GM12878 (cell line): ENCODE measurements at regions of chr18 and their contacts with region 1.

Region 1: GRCh38 chr18:76982841-76983587 is 149.6 kb downstream of the MBP start:
- DNase-seq: peak; percentile 48
- ATAC-seq: peak; percentile 83
- H3K4me3 ChIP-seq: no peak overlapping the region
- H3K27ac ChIP-seq: no peak overlapping the region
- H3K4me1 ChIP-seq: peaks cover 21% of the 10 kb centered on the region
- H3K27me3 ChIP-seq: no peaks in the 10 kb centered on the region
- CTCF ChIP-seq: peak; percentile 91 to 93 (median 92)
- EP300 ChIP-seq: no peak
- POLR2A ChIP-seq: no peak
- RAD21 ChIP-seq: peak; percentile 83

Region 2: DNA sequence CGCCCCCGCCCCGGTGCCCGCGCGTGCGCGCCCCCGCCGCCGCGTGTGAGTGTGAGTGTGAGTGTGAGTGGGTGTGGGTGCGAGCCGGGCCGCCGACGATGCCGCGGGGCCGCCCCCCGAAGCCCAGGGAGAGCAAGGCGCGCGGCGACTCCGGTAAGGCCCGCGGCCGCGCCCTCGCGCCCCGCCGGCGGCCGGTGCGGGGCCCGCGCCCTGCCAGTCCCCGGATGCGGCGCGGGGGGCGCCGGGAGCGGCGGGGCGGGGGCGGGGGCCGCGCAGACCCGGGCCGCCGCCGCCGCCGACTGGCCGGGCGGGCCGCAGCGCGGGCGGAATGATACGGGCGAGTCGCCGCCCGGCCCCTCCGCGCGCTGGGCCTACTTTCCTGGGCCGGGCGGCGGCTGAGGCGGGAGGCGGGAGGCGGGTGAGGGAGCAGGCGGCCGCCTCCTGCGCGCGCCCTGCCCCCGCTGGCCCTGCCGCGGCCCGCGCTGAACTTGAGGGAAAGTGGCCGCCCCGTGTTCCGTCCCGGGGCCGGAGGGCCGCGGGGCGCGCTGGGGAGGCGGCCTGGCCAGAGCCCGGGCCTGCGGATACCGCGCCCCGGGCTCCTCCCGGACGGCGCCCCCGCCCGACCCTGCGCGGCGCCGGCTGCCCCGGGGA is 160.4 kb before region 1 on chr18 and contains the start of gene ZNF236:
- CTCF ChIA-PET with region 1: interaction called, 5 read pairs
- POLR2A ChIA-PET with region 1: no interaction called
- RAD21 ChIA-PET with region 1: interaction called, 4 read pairs
- SMC1A ChIA-PET with region 1: interaction called, 12 read pairs
- in situ Hi-C with region 1: no loop called
- intact Hi-C with region 1: no loop called
- DNase-seq: no peak
- ATAC-seq: peak; percentile 47
- H3K4me3 ChIP-seq: peak within 1 kb of the TSS; percentile 100
- H3K27ac ChIP-seq: peak within 1 kb of the TSS; percentile 95
- H3K4me1 ChIP-seq: peaks cover 16% of the 10 kb centered on the region
- H3K27me3 ChIP-seq: no peaks in the 10 kb centered on the region
- CTCF ChIP-seq: no peak
- EP300 ChIP-seq: no peak
- POLR2A ChIP-seq: peak; percentile 76
- RAD21 ChIP-seq: no peak
- polyA plus RNA-seq, gene ZNF236: 1.0 to 1.3 TPM

Region 3: DNA sequence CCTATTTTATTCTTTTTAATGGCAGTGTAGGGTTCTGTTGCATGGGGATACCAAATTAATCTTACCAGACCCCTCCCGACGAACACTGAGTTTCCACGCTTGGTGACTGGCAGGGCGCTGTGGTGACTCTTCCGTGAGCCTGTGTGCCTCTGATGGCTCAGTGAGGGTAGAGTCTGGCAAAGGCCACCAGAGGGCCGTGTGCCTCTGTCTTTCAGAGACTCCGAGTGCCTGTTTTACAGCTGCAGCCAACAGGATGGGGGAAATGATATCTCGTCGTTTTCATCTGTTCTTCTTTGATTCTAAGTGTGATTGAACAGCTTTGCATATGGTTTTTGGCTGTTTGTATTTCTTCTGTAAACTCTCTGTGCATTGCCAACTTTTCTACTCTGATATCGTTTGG is 60.9 kb before region 1 on chr18:
- CTCF ChIA-PET with region 1: interaction called, 236 read pairs
- POLR2A ChIA-PET with region 1: interaction called, 8 read pairs
- RAD21 ChIA-PET with region 1: interaction called, 69 read pairs
- SMC1A ChIA-PET with region 1: interaction called, 97 read pairs
- in situ Hi-C with region 1: loop called (anchors 5 kb)
- intact Hi-C with region 1: loop called (anchors 1 kb)
- DNase-seq: peak; percentile 26
- ATAC-seq: peak; percentile 100
- H3K4me3 ChIP-seq: no peak overlapping the region
- H3K27ac ChIP-seq: no peak overlapping the region
- H3K4me1 ChIP-seq: no peaks in the 10 kb centered on the region
- H3K27me3 ChIP-seq: no peaks in the 10 kb centered on the region
- CTCF ChIP-seq: peak; percentile 81 to 83 (median 81)
- EP300 ChIP-seq: peak in 1 of 2 experiments; percentile 12; a peak in 1 of 4 replicates
- POLR2A ChIP-seq: no peak
- RAD21 ChIP-seq: peak; percentile 92

Region 4: DNA sequence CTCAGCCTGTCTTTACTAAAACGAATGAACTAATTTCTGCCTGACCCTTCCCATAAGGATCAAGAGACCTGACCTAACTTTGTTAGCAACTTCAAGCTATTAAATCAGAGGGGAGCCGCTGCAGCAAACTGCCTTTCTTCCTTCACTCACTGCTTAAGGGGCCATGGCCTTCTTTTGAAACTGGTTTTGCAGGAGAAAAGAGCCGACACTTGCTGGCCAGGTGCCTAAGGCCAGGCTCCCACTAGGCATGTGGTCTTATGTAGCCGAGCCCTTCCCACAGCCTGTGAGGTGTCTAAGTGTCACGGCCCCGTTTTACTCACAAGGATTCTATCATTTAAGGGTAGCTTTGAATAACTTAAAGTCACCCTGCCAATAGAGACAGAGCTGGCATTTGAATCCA is 29.9 kb before region 1 on chr18:
- CTCF ChIA-PET with region 1: interaction called, 208 read pairs
- POLR2A ChIA-PET with region 1: no interaction called
- RAD21 ChIA-PET with region 1: interaction called, 7 read pairs
- SMC1A ChIA-PET with region 1: interaction called, 140 read pairs
- in situ Hi-C with region 1: no loop called
- intact Hi-C with region 1: no loop called
- DNase-seq: no peak
- ATAC-seq: no peak
- H3K4me3 ChIP-seq: no peak overlapping the region
- H3K27ac ChIP-seq: no peak overlapping the region
- H3K4me1 ChIP-seq: no peaks in the 10 kb centered on the region
- H3K27me3 ChIP-seq: no peaks in the 10 kb centered on the region
- CTCF ChIP-seq: no peak
- EP300 ChIP-seq: no peak
- POLR2A ChIP-seq: no peak
- RAD21 ChIP-seq: no peak

Region 5: GRCh38 chr18:76970770-76971559 is 12.0 kb before region 1 on chr18:
- CTCF ChIA-PET with region 1: interaction called, 208 read pairs
- POLR2A ChIA-PET with region 1: no interaction called
- RAD21 ChIA-PET with region 1: interaction called, 70 read pairs
- SMC1A ChIA-PET with region 1: interaction called, 140 read pairs
- in situ Hi-C with region 1: no loop called
- intact Hi-C with region 1: no loop called
- DNase-seq: no peak
- ATAC-seq: no peak
- H3K4me3 ChIP-seq: no peak overlapping the region
- H3K27ac ChIP-seq: no peak overlapping the region
- H3K4me1 ChIP-seq: peaks cover 4% of the 10 kb centered on the region; the same call in 1 of the 2 replicates
- H3K27me3 ChIP-seq: no peaks in the 10 kb centered on the region
- CTCF ChIP-seq: no peak
- EP300 ChIP-seq: no peak
- POLR2A ChIP-seq: no peak
- RAD21 ChIP-seq: no peak

Region 6: DNA sequence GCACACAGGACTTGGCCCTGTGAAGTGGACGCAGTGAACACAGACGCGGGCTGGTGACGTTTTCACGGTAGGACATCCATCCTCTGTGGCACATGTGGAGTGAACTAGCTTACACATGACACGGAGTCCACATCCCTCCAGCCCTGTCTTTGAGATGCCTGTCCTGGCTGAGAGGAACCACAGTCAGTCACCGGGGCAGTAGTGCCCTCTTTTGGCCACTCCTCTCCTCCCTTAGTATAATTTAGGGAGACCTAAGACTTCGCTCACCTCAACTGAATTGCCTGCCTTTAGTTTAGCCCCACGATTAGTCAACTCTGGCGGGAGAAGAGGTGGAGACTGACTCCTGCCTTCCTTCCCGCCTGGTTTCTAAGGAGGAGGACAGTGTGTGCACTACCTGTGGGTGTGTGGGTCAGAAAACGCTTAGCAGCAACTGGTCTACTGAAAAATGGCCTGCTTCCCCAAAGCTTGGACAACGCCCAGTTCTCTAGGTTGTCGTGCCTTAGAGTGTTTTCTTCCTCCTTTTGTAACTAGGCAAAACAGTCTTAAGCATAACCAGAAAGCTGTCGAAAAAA is 79.0 kb after region 1 on chr18:
- CTCF ChIA-PET with region 1: interaction called, 10 read pairs
- POLR2A ChIA-PET with region 1: no interaction called
- RAD21 ChIA-PET with region 1: interaction called, 4 read pairs
- SMC1A ChIA-PET with region 1: interaction called, 4 read pairs
- in situ Hi-C with region 1: no loop called
- intact Hi-C with region 1: no loop called
- DNase-seq: no peak
- ATAC-seq: peak; percentile 65
- H3K4me3 ChIP-seq: peak overlapping the region; percentile 2; the same call in 1 of the 2 replicates
- H3K27ac ChIP-seq: peak overlapping the region; percentile 97
- H3K4me1 ChIP-seq: peaks cover 61% of the 10 kb centered on the region
- H3K27me3 ChIP-seq: no peaks in the 10 kb centered on the region
- CTCF ChIP-seq: peak in 2 of 3 experiments; percentile 16 to 26; a peak in 2 of 6 replicates
- EP300 ChIP-seq: no peak
- POLR2A ChIP-seq: no peak; the same call in 1 of the 2 replicates
- RAD21 ChIP-seq: peak; percentile 24; the same call in 1 of the 2 replicates